SK-N-SH (cell line): ENCODE measurements at regions of chr14 and their contacts with region 1.

Region 1: GRCh38 chr14:28608851-28609828 is 157.4 kb upstream of the FOXG1 start:
- DNase-seq: peak; percentile 25
- H3K4me3 ChIP-seq: peak overlapping the region in 1 of 2 experiments; percentile 18; a peak in 1 of 4 replicates
- H3K27ac ChIP-seq: no peak overlapping the region
- H3K4me1 ChIP-seq: no peaks in the 10 kb centered on the region
- H3K27me3 ChIP-seq: peaks cover 9% of the 10 kb centered on the region; the same call in 1 of the 2 replicates
- CTCF ChIP-seq: peak; percentile 96
- EP300 ChIP-seq: no peak
- RAD21 ChIP-seq: peak; percentile 90

Region 2: DNA sequence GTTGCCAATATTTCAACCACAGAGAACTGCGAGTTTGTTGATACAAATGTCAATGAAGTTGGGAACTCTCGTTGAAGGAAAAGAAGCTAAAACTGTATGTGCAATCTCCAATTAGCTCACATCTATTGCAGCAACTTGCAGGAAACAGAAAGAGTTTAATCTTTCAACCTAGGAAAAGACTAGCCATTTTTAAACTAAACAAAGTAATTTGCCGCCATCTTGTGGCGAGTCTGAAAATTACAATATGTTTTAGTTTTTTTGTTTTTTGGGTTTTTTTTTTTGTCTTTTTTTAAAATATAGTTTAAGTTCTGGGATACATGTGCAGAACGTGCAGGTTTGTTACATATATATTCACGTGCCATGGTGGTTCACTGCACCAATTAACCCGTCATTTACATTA is 26.2 kb after region 1 on chr14:
- CTCF ChIA-PET with region 1: interaction called, 10 read pairs
- POLR2A ChIA-PET with region 1: no interaction called
- DNase-seq: no peak
- H3K4me3 ChIP-seq: no peak overlapping the region
- H3K27ac ChIP-seq: no peak overlapping the region
- H3K4me1 ChIP-seq: no peaks in the 10 kb centered on the region
- H3K27me3 ChIP-seq: no peaks in the 10 kb centered on the region
- CTCF ChIP-seq: peak; percentile 68
- EP300 ChIP-seq: no peak
- RAD21 ChIP-seq: peak; percentile 50